ENCODE measurements at regions of chr17 and their contacts with region 1.

Region 1: GRCh38 chr17:49031965-49032928 is 35.1 kb downstream of the IGF2BP1 start:
- DNase-seq: peak; percentile 82
- ATAC-seq: peak; percentile 67
- H3K4me3 ChIP-seq: peak overlapping the region; percentile 6 to 13; a peak in 2 of 4 replicates
- H3K27ac ChIP-seq: peak overlapping the region; percentile 25; the same call in 1 of the 2 replicates
- H3K4me1 ChIP-seq: peaks cover 12 to 25% of the 10 kb centered on the region in 2 experiments
- H3K27me3 ChIP-seq: no peaks in the 10 kb centered on the region
- CTCF ChIP-seq: peak; percentile 79 to 98 (median 92)
- POLR2A ChIP-seq: no peak
- RAD21 ChIP-seq: peak; percentile 100

Region 2: DNA sequence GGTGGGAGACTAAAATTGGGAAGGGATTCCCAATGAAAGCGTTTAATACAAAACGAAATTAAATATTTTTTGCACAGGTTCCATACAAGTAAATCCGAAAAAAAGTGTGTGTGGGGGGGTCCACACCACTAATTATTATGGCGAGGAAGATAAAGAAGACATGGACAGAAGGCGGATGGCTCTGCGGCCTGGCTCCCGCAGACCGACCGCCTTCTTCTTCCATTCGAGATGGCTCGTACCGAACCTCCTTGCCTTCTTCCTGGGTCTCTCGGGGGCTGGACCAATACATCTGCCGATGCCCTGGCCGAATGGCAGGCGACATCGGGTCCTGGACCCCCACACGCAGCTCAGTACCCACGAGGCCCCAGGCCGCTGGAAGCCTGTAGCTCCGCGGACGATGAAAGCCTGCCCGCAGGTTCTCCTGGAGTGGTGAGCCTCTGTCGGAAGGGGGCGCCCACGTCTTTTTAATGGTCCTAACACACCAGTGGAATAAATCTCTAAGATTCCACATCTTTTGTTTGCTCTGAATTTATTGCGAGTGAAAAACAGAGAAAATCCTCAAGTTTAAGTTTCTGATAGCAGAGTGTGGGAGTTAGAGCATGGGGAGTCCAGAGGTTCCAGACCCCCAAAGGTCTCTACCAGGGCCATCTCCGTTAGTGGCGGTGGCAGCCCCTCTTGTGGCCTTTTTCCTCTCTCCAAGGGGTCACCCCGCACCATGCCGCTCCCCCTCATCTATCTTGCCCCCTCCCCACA is 307.8 kb before region 1 on chr17:
- CTCF ChIA-PET with region 1: interaction called, 5 read pairs
- POLR2A ChIA-PET with region 1: no interaction called
- RAD21 ChIA-PET with region 1: interaction called in 1 of 2 experiments, 3 read pairs
- intact Hi-C with region 1: loop called (anchors 5 kb)
- DNase-seq: peak; percentile 32
- ATAC-seq: peak; percentile 74
- H3K4me3 ChIP-seq: no peak overlapping the region
- H3K27ac ChIP-seq: no peak overlapping the region
- H3K4me1 ChIP-seq: peaks cover 5 to 21% of the 10 kb centered on the region in 2 experiments; a peak in 3 of 4 replicates
- H3K27me3 ChIP-seq: no peaks in the 10 kb centered on the region
- CTCF ChIP-seq: peak; percentile 85 to 90 (median 87)
- POLR2A ChIP-seq: no peak
- RAD21 ChIP-seq: peak; percentile 91

Region 3: DNA sequence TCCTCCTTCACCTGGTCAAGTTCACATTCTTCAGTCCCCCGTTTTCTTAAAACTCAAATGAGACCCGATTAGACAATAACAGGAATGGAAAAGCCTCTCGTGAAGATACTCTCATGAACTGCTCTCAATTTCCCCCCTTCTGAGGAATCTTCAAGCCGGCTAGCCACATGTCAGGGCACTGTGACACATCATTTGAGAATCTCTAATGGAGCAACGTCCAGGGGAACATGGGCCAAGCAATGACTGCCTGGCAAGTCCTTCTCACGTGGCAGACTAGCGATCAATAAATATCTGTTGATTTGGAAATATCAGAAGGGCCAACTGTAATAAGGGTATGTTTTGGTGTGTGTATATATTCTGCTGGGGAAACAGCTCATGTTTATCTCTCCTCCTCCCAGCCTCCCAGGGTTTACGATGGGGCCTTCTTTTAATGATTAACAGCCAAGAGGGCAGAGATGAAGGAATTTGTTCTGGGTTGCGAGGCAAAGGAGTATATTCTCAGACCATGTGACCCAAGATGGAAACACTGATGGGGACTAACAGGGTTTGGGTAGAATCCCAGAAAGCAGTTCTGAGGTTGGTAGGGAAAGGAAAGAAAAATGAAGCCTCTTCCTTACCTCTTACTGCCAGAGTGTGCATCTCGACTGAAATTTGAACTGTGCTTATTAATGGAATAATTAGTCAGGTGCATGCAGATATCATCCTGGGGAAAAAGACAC is 236.6 kb before region 1 on chr17:
- CTCF ChIA-PET with region 1: no interaction called
- POLR2A ChIA-PET with region 1: no interaction called
- RAD21 ChIA-PET with region 1: no interaction called
- intact Hi-C with region 1: no loop called
- DNase-seq: peak; percentile 36
- ATAC-seq: peak; percentile 44
- H3K4me3 ChIP-seq: peak overlapping the region in 1 of 2 experiments; percentile 5; a peak in 1 of 4 replicates
- H3K27ac ChIP-seq: no peak overlapping the region; the same call in 1 of the 2 replicates
- H3K4me1 ChIP-seq: peaks cover 16 to 35% of the 10 kb centered on the region in 2 experiments
- H3K27me3 ChIP-seq: no peaks in the 10 kb centered on the region
- CTCF ChIP-seq: no peak
- POLR2A ChIP-seq: no peak
- RAD21 ChIP-seq: no peak

Region 4: DNA sequence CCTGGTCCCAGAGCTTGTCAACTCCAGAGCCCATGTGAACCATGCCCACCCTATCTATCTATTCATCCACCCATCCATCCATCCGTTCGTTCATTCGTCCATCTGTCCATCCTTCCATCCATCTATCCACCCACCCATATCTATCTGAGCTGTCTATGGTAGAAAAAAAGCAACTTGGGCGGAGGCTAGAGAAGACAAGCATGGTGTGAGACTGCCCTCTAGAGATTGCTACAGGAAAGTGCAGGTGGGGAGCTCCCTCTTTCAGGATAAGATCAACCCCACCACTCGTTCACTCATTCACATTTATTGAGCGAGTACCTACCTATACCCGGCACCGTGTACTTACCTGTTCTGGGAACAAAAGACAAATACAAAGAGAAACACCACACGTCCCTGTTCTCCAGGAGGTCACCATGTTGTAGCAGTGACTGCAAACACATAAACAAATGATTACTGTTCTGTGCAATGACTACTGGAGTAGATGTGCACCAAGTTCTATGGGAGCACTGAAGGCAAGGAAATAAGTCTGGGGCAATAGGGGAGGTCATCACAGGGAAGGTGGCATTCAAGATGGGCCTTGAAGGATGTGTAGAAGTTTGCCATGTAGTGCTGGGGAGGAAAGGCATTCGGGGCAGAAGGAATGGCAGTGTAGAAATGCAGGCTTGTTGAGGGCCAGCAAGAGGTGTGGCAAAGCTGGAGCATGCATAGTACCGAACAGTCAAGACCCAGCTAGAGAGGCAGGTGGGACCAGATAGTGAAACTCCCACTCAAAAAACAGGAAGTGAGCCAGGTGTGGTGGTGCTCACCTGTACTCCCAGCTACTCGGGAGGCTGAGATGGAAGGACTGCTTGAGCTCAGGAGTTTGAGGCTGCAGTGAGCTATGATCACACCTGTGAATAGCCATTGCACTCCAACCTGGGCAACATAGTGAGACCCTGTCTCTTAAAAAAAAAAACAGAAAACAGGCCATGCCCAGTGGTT is 153.0 kb before region 1 on chr17:
- CTCF ChIA-PET with region 1: interaction called, 56 read pairs
- POLR2A ChIA-PET with region 1: interaction called, 5 read pairs
- RAD21 ChIA-PET with region 1: interaction called, 7 to 10 read pairs
- intact Hi-C with region 1: loop called (anchors 1 kb)
- DNase-seq: peak; percentile 82
- ATAC-seq: peak; percentile 93
- H3K4me3 ChIP-seq: no peak overlapping the region
- H3K27ac ChIP-seq: no peak overlapping the region
- H3K4me1 ChIP-seq: peaks cover 0 to 2% of the 10 kb centered on the region in 2 experiments; a peak in 1 of 4 replicates
- H3K27me3 ChIP-seq: no peaks in the 10 kb centered on the region
- CTCF ChIP-seq: peak; percentile 97 to 100 (median 99)
- POLR2A ChIP-seq: no peak
- RAD21 ChIP-seq: peak; percentile 100

Region 5: DNA sequence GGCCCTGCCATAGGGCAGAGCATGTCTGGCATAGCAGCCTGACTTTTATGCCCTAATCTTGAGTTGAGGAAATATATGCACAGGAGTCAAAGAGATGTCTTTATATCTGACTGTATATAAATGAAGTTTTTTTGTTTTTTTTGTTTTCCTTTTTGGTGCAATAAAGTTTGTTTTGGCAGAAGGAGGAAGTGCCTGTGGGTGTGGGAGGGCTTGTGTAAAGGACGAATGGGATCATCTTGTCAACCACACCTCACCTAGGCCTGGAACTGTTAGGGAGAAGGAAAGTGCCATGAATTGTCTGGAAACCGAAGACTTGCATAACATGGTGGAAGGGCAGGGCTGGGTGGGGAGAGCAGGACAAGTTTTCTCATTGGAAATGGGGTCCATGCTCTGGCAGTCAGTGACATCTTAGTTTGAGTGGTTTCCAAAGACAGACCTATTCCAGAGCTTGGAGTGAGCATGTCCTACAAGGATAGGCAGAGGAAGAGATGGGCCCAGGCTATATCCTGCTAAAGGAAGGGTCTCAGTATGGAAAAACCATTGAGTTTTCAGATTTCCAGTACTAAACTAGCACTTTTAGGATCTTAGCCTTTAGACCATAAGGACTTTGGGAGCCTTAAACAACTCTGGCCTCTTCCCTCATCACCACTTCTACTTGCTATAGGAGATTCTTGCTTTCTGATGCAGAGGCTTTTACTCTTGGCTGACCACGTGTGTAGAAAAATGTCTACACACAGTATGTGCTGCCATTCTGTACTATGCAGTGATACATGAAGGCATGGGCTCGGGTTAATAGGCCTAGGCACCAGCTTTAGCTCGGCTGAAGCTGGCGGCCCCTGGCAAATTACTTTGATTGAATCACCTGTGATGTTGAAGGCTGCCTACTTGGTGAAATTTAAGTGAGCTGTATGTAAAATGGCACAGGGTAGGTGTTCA is 103.1 kb before region 1 on chr17:
- CTCF ChIA-PET with region 1: interaction called, 18 read pairs
- POLR2A ChIA-PET with region 1: interaction called, 5 read pairs
- RAD21 ChIA-PET with region 1: interaction called in 1 of 2 experiments, 4 read pairs
- intact Hi-C with region 1: no loop called
- DNase-seq: no peak
- ATAC-seq: peak; percentile 23; the same call in 1 of the 2 replicates
- H3K4me3 ChIP-seq: no peak overlapping the region
- H3K27ac ChIP-seq: no peak overlapping the region
- H3K4me1 ChIP-seq: no peaks in the 10 kb centered on the region
- H3K27me3 ChIP-seq: no peaks in the 10 kb centered on the region
- CTCF ChIP-seq: no peak
- POLR2A ChIP-seq: no peak
- RAD21 ChIP-seq: no peak

Region 6: DNA sequence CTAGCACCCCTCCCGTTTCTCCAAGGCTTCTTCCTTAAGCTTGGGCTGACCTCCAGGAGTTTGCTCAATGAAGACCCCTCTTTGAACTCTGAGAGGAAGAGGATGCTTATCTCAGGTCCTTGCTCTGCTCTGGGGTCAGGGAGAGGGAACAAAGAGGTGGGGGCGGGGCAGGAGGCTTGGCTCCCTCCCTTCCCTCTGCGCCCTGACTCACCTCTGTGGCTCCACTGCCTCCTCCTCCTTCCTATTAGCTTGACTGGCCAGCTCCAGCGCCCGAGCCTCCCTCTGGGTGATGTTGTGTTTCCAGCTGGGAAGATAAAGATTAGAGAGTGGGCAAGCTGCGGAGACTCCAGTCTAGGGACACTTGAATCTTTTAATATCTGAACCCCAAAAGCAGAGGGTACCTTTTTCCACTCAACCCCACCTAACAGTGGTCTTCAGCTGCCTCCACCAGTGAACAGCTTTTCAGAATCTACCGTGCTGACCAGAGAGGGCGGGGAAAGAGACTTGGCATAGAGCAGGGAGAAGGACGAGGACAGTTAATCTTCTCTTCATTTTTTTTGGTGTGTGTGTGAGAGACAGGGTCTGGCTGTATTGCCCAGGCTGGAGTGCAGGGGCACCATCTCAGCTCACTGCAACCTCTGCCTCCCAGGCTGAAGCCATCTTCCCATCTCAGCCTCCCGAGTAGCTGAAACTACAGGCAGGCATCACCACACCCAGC is 70.6 kb before region 1 on chr17:
- CTCF ChIA-PET with region 1: interaction called, 20 read pairs
- POLR2A ChIA-PET with region 1: no interaction called
- RAD21 ChIA-PET with region 1: interaction called in 1 of 2 experiments, 4 read pairs
- intact Hi-C with region 1: no loop called
- DNase-seq: no peak
- ATAC-seq: peak; percentile 90
- H3K4me3 ChIP-seq: peak overlapping the region in 1 of 2 experiments; percentile 10; a peak in 2 of 4 replicates
- H3K27ac ChIP-seq: no peak overlapping the region; the same call in 1 of the 2 replicates
- H3K4me1 ChIP-seq: peaks cover 11 to 26% of the 10 kb centered on the region in 2 experiments
- H3K27me3 ChIP-seq: no peaks in the 10 kb centered on the region
- CTCF ChIP-seq: no peak
- POLR2A ChIP-seq: no peak
- RAD21 ChIP-seq: no peak

Region 7: DNA sequence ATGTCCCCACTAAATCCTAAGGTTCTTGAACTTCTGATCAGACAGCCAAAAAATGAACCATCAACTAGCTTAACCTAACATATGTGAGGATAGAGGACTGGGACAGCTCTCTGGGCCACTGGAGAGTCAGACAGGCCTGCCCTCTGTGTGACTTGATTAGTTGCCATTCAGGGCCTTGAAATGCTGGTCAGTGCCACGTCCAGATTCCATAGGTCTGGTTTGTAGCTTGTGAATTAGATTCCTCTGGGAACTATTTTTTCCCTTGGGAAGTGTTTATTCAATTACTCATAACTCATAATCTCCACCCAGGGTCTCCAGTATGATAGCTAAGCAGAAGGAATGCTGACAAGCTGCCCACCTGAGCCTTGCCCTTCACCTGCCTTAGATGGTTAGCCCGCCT is 13.1 kb after region 1 on chr17:
- CTCF ChIA-PET with region 1: interaction called, 22 read pairs
- POLR2A ChIA-PET with region 1: interaction called, 4 read pairs
- RAD21 ChIA-PET with region 1: no interaction called
- intact Hi-C with region 1: no loop called
- DNase-seq: no peak
- ATAC-seq: no peak
- H3K4me3 ChIP-seq: no peak overlapping the region
- H3K27ac ChIP-seq: no peak overlapping the region
- H3K4me1 ChIP-seq: peaks cover 0 to 6% of the 10 kb centered on the region in 2 experiments; a peak in 1 of 4 replicates
- H3K27me3 ChIP-seq: no peaks in the 10 kb centered on the region
- CTCF ChIP-seq: no peak
- POLR2A ChIP-seq: no peak
- RAD21 ChIP-seq: no peak